T-cell (primary cell): ENCODE measurements at regions of chr6 and their contacts with region 1.

Region 1: DNA sequence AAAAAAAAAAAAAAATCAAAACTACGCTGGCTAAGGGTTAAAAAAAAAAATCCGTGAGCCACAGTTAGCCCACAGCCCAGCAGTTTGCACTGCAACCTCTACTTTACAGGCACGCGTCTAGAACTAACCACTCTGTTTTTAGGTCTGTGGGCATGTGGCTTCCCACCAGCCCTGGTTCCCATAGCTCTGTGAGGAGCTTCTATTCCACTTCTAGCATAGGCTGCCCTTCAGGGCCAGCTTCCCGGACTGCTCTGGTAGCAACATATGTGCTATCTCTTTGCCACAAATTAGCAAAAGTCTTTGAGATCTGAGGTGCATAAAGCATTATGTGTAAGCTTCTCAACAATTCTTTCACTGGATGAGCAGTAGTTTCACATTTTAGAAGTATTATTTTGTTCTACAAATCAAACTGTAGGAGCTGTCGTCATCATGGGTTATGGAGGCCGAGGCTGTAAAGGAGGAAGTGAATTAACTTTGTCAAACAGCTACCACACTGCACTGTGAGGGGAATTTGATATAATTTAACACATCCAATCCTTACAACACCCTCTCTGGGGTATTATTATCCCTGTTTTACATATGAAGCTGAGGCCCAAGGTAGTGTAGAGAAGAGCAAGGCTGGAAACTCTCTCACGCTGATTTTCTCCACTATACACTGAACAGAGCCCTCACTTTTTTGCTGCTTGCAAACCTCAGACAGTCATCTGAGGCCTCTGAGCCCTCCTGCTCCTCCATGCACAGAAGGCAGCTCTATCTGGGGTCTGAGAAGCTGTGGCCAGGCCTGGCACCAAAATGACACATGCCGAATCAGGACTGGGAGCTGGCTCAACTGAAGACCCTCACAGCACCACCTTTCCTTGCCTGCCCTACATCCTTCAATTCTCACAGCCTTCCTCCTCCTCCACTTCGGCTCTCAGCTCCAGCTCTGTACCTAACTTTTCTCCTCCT is 35.4 kb downstream of the MAN1A1 start:
- DNase-seq: peak in 31 of 35 experiments; percentile 10 to 70 (median 40)
- ATAC-seq: peak; percentile 62 to 78 (median 66)
- H3K4me3 ChIP-seq: peak overlapping the region; percentile 6 to 15
- H3K4me3 Mint-ChIP-seq: peak overlapping the region; percentile 35 to 66 (median 41)
- H3K27ac ChIP-seq: peak overlapping the region; percentile 81
- H3K27ac Mint-ChIP-seq: peak overlapping the region; percentile 89 to 93
- H3K4me1 ChIP-seq: peaks cover 22 to 33% of the 10 kb centered on the region in 2 experiments
- H3K4me1 Mint-ChIP-seq: peaks cover 46 to 59% (median 56%) of the 10 kb centered on the region in 3 donors
- H3K27me3 ChIP-seq: no peaks in the 10 kb centered on the region
- H3K27me3 Mint-ChIP-seq: no peaks in the 10 kb centered on the region

Region 2: DNA sequence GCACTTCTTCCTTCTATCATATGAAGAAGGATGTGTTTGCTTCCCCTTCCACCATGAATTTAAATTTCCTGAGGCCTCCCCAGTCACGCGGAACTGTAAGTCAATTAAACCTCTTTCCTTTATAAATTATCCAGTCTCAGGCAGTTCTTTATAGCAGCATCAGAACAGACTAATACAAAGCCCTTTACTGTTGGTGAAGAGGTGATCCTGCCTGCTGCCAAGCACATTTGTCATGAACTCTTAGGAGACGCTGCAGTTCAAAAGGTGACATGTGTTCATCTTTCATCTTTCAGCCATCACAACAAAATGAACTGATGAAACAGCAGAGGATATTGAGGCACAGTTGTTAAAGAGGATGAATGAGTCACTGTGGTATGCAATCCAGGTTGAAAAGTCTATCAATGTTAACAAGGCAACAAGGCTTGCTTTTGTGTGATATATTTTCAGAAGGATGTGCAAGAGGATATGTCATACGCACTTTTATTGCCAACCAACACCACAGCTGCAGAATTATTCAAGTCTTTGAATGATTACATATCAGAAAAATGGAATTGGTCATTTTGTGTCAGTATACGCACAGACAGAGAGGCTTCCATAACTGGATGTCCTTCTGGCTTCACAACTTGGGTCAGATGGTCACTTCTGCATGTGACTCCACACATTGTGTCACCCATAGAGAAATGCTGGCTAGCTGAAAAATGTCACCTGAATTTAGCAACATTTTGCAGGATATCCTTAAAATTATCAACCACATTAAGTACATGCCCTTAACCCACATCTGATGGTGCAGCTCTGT is 818.5 kb before region 1 on chr6:
- CTCF ChIA-PET with region 1: no interaction called
- POLR2A ChIA-PET with region 1: interaction called in 1 of 2 experiments, 10 read pairs
- DNase-seq: no peak
- ATAC-seq: peak in 1 of 4 experiments; percentile 52
- H3K4me3 ChIP-seq: no peak overlapping the region
- H3K4me3 Mint-ChIP-seq: no peak overlapping the region
- H3K27ac ChIP-seq: no peak overlapping the region
- H3K27ac Mint-ChIP-seq: no peak overlapping the region
- H3K4me1 ChIP-seq: no peaks in the 10 kb centered on the region
- H3K4me1 Mint-ChIP-seq: peaks cover 8 to 13% (median 9%) of the 10 kb centered on the region in 3 donors
- H3K27me3 ChIP-seq: no peaks in the 10 kb centered on the region
- H3K27me3 Mint-ChIP-seq: no peaks in the 10 kb centered on the region

Region 3: GRCh38 chr6:119250036-119250435 is 64.2 kb before region 1 on chr6:
- CTCF ChIA-PET with region 1: no interaction called
- POLR2A ChIA-PET with region 1: no interaction called
- DNase-seq: no peak
- ATAC-seq: no peak
- H3K4me3 ChIP-seq: no peak overlapping the region
- H3K4me3 Mint-ChIP-seq: no peak overlapping the region
- H3K27ac ChIP-seq: no peak overlapping the region
- H3K27ac Mint-ChIP-seq: no peak overlapping the region
- H3K4me1 ChIP-seq: no peaks in the 10 kb centered on the region
- H3K4me1 Mint-ChIP-seq: peaks cover 1 to 9% (median 3%) of the 10 kb centered on the region in 3 donors
- H3K27me3 ChIP-seq: no peaks in the 10 kb centered on the region
- H3K27me3 Mint-ChIP-seq: no peaks in the 10 kb centered on the region

Region 4: GRCh38 chr6:119333707-119334295 is 19.6 kb after region 1 on chr6:
- CTCF ChIA-PET with region 1: interaction called, 3 to 13 read pairs
- POLR2A ChIA-PET with region 1: no interaction called
- DNase-seq: peak in 1 of 35 experiments; percentile 60
- ATAC-seq: peak; percentile 49 to 80 (median 61)
- H3K4me3 ChIP-seq: no peak overlapping the region
- H3K4me3 Mint-ChIP-seq: no peak overlapping the region
- H3K27ac ChIP-seq: no peak overlapping the region
- H3K27ac Mint-ChIP-seq: no peak overlapping the region
- H3K4me1 ChIP-seq: peaks cover 0 to 3% of the 10 kb centered on the region in 2 experiments
- H3K4me1 Mint-ChIP-seq: peaks cover 11 to 27% (median 15%) of the 10 kb centered on the region in 3 donors
- H3K27me3 ChIP-seq: no peaks in the 10 kb centered on the region
- H3K27me3 Mint-ChIP-seq: no peaks in the 10 kb centered on the region

Region 5: GRCh38 chr6:119349323-119350042 is 35.3 kb after region 1 on chr6 and contains the start of gene MAN1A1:
- CTCF ChIA-PET with region 1: interaction called, 7 to 17 read pairs
- POLR2A ChIA-PET with region 1: interaction called in 1 of 2 experiments, 18 read pairs
- DNase-seq: peak; percentile 73 to 94 (median 84)
- ATAC-seq: peak; percentile 89 to 91 (median 90)
- H3K4me3 ChIP-seq: peak within 1 kb of the TSS; percentile 95 to 97
- H3K4me3 Mint-ChIP-seq: peak within 1 kb of the TSS; percentile 82 to 94 (median 89)
- H3K27ac ChIP-seq: peak within 1 kb of the TSS; percentile 69
- H3K27ac Mint-ChIP-seq: peak within 1 kb of the TSS; percentile 77 to 91
- H3K4me1 ChIP-seq: peaks cover 4 to 15% of the 10 kb centered on the region in 2 experiments
- H3K4me1 Mint-ChIP-seq: peaks cover 54 to 57% (median 55%) of the 10 kb centered on the region in 3 donors
- H3K27me3 ChIP-seq: no peaks in the 10 kb centered on the region
- H3K27me3 Mint-ChIP-seq: no peaks in the 10 kb centered on the region
- total RNA-seq, gene MAN1A1: 9.4 to 13.6 (median 12.3) TPM

Region 6: DNA sequence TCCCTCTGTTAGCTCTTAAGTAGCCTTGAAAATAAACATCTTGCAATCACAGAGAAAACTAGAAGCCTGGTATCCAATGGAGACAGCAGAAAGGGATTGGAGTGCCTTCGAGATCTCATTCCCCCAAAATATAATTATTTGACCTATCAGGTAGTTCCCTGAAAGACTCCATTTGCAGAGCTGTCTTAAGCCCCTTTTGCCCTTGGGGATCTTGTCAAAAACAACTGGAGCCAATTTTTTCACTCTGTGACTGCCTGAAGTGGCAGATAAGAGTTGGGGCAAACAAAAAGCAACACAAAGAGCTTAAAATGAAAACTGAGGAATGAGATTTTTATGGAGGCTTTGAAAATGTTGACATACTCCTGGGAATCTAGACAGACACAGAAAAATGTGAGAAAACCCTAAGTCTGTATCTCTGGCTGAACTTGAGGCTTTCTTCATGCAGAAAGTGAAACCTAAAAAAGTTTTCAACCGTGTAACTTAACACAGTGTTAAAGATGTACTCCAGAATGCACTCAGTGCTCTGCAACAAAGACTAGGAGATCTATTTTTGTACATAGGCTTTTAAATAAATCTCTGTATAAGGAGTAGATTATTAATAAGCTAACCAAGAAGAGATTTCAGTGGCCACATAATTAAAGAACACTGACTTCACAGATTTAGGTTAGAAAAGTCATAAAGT is 1006.4 kb after region 1 on chr6:
- CTCF ChIA-PET with region 1: no interaction called
- POLR2A ChIA-PET with region 1: no interaction called
- DNase-seq: no peak
- ATAC-seq: no peak
- H3K4me3 ChIP-seq: no peak overlapping the region
- H3K4me3 Mint-ChIP-seq: no peak overlapping the region
- H3K27ac ChIP-seq: no peak overlapping the region
- H3K27ac Mint-ChIP-seq: no peak overlapping the region
- H3K4me1 ChIP-seq: no peaks in the 10 kb centered on the region
- H3K4me1 Mint-ChIP-seq: no peaks in the 10 kb centered on the region
- H3K27me3 ChIP-seq: no peaks in the 10 kb centered on the region
- H3K27me3 Mint-ChIP-seq: no peaks in the 10 kb centered on the region